Mammary epithelial cell (primary cell): ENCODE measurements at regions of chr1 and their contacts with region 1.

Region 1: GRCh38 chr1:227895828-227896685 is 51.7 kb downstream of the WNT9A start:
- DNase-seq: peak; percentile 81
- H3K4me3 ChIP-seq: no peak overlapping the region
- H3K27ac ChIP-seq: peak overlapping the region; percentile 52
- H3K4me1 ChIP-seq: peaks cover 46% of the 10 kb centered on the region
- H3K27me3 ChIP-seq: no peaks in the 10 kb centered on the region
- CTCF ChIP-seq: peak in 1 of 2 donors; percentile 20

Region 2: DNA sequence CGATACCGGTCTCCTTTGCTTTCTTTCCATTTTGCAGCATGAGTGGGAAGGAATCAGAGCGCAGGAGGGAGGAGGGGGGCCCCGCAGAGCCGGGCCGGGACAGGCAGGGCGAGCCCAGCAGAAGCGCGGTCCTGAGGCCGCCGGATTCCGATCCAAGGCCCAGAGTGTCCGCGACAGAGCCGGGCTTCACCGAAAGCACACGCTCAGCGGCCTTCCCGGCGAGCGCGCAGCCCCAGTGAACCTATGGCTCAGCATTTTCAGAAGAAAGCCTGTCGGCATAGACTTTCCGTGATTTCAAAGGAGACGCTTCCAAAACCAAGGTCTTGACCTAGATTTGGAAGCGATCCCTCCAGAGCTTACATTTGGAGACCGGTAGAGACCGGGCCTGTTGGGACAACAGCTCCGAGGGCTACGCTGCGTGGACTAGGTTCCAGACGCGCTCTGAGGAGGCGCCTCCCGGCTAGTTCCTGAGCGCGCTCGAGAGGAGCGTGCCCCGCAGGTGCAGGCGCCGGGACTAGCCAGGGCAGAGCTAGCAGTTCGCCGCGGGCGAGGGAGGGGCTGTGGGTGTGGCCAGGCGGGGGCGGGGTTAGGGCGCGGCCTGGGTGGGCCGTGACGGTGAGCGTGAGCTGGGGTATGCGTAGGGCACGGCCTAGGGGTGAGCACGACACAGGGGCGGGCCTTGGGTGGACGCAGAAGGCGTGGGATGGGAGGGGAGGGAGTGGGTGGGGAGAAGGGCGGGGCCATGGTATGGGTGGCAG is 108.4 kb before region 1 on chr1:
- CTCF ChIA-PET with region 1: no interaction called
- dilution Hi-C with region 1: no loop called
- in situ Hi-C with region 1: no loop called
- intact Hi-C with region 1: loop called (anchors 5 kb)
- DNase-seq: peak; percentile 96
- H3K4me3 ChIP-seq: peak overlapping the region; percentile 46 to 84 (median 69)
- H3K27ac ChIP-seq: peak overlapping the region; percentile 50
- H3K4me1 ChIP-seq: peaks cover 22% of the 10 kb centered on the region
- H3K27me3 ChIP-seq: no peaks in the 10 kb centered on the region
- CTCF ChIP-seq: no peak

Region 3: DNA sequence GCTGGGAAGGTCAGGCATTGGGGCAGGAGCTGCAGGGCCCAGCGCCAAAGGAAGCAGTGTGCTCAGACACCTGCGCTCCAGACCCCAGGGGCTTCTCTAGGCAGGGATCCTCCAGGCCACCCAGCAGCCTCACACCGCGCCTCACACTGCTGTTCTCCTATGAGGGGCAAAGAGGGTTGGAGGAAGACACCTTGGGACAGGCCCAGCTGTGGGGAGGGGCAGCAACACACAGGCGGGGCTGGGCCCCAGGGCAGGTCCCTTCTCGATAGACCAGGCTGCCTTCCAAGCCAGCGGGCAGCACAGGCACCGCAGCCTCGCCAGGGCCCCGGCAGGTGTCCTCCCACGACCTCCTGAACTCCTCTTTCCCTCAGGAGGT is 101.3 kb before region 1 on chr1:
- CTCF ChIA-PET with region 1: no interaction called
- dilution Hi-C with region 1: loop called (anchors 5 kb)
- in situ Hi-C with region 1: no loop called
- intact Hi-C with region 1: no loop called
- DNase-seq: no peak
- H3K4me3 ChIP-seq: no peak overlapping the region
- H3K27ac ChIP-seq: no peak overlapping the region
- H3K4me1 ChIP-seq: peaks cover 9% of the 10 kb centered on the region
- H3K27me3 ChIP-seq: no peaks in the 10 kb centered on the region
- CTCF ChIP-seq: no peak

Region 4: GRCh38 chr1:227844320-227845146 is 51.5 kb before region 1 on chr1:
- CTCF ChIA-PET with region 1: no interaction called
- dilution Hi-C with region 1: loop called (anchors 5 kb)
- in situ Hi-C with region 1: no loop called
- intact Hi-C with region 1: no loop called
- DNase-seq: no peak
- H3K4me3 ChIP-seq: no peak overlapping the region
- H3K27ac ChIP-seq: no peak overlapping the region
- H3K4me1 ChIP-seq: no peaks in the 10 kb centered on the region
- H3K27me3 ChIP-seq: no peaks in the 10 kb centered on the region
- CTCF ChIP-seq: no peak

Region 5: DNA sequence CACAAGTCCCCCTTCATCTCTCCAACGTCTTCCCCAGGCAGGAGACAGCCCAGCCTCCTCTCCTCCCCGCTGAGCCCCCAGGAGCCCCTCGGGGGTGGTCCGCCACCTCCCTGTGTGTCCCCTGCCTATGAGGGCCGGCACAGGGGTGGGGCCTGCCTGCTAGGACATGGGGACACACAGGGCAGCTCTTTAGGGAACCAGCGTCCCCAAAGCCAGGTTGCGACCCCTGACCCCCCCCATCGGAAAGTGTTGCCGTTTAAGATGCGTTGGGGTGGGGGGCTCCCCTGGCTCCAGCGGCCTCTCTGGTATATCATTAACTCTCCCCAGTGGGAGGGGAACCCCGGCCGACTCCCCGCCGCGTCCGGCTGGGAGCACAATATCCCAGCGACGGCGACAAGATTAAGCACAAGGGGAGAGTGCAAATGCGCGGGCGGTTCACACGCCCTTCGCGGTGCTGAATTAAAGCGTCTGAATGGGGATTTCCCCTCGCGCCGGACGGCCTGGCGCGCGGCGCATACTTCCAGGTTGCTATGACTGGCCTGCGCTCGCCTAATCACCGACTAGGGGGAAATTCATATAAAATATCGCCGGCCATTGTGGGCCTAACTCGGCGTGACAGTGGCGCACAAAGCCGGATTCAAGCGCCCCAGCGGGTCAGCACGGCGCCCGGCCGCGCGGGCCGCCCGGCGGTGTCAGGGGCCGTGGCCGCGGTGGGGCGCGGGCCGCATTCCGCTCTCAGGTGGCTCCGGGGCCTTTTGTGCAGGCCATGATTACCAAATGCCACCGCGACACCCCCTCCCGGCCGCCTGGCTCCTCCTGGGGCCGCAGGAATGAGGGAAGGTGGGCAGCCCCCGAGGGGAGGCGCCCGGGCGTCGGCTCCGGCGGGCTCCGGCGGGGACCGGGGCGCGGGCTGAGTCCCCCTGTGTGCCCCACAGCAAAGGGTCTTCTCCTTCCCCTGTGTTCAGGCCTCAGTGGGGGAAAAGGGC is 141.6 kb after region 1 on chr1:
- CTCF ChIA-PET with region 1: no interaction called
- dilution Hi-C with region 1: no loop called
- in situ Hi-C with region 1: no loop called
- intact Hi-C with region 1: no loop called
- DNase-seq: peak; percentile 52
- H3K4me3 ChIP-seq: no peak overlapping the region
- H3K27ac ChIP-seq: no peak overlapping the region
- H3K4me1 ChIP-seq: peaks cover 5% of the 10 kb centered on the region
- H3K27me3 ChIP-seq: peaks cover 15% of the 10 kb centered on the region
- CTCF ChIP-seq: no peak